ENCODE measurements at regions of chr4 and their contacts with region 1.

Region 1: GRCh38 chr4:663438-664428 is 10.3 kb downstream of the ATP5ME start:
- DNase-seq: no peak
- H3K4me3 ChIP-seq: peak overlapping the region; percentile 41
- CTCF ChIP-seq: no peak

Region 2: DNA sequence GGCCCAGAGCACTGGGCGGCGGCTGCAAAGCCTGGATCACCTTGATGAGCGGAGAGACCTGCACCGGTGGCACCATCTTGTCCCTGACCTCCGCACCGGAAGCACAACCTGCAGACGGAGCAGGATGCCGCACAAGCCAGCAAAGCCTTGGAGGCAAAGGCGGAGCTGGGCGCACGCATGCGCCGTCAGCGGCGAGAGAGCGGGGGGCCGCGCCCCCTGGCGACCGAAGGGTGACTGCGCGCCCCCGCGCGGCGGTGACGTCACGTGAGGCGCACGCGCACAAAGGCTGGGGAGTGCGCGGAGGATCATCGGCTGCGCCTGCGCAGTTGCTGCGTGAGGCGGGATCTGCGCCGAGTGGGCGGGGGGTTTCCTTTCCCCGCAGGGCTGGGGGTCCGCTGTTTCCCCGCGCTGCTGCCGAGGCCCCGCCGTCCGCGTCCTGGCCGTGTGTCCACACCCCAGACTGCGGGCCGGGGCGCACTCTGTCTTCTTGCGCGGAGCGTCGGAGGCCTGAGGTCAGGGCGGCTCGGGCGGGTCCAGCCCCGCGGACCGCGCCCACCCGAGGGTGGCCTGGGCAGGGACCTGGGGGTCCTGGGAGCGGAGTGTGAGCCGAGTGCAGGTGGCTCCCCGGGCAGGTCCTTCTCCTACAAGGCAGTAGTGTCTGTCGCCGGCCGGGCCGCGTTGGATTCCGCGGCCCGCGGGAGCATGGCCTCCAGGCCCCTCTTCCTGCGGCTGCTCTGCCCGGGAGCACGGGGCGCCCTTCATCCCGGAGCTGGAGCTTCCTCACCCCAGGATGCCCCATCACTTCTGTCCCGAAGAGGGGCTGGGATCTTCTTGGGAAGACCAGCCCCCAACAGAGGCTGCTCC is 10.7 kb after region 1 on chr4 and contains the starts of genes ATP5ME and MYL5:
- CTCF ChIA-PET with region 1: interaction called, 13 read pairs
- POLR2A ChIA-PET with region 1: no interaction called
- DNase-seq: peak; percentile 49
- H3K4me3 ChIP-seq: peak within 1 kb of the TSS; percentile 82
- CTCF ChIP-seq: peak; percentile 93